B cell (primary cell): ENCODE measurements at regions of chr22 and their contacts with region 1.

Region 1: GRCh38 chr22:37316875-37317371 is 34.6 kb downstream of the CYTH4 start:
- DNase-seq: peak; percentile 83
- ATAC-seq: peak; percentile 86
- H3K4me3 ChIP-seq: no peak overlapping the region
- H3K4me3 Mint-ChIP-seq: no peak overlapping the region
- H3K27ac ChIP-seq: no peak overlapping the region
- H3K27ac Mint-ChIP-seq: no peak overlapping the region
- H3K4me1 ChIP-seq: peaks cover 20 to 29% of the 10 kb centered on the region in 2 donors
- H3K4me1 Mint-ChIP-seq: peaks cover 32% of the 10 kb centered on the region
- H3K27me3 ChIP-seq: peaks cover 0 to 3% (median 0%) of the 10 kb centered on the region in 4 experiments
- H3K27me3 Mint-ChIP-seq: peaks cover 12% of the 10 kb centered on the region
- CTCF ChIP-seq: peak; percentile 85

Region 2: GRCh38 chr22:36702842-36703215 is 614.1 kb before region 1 on chr22:
- CTCF ChIA-PET with region 1: no interaction called
- POLR2A ChIA-PET with region 1: no interaction called
- intact Hi-C with region 1: no loop called
- DNase-seq: no peak
- ATAC-seq: no peak
- H3K4me3 ChIP-seq: no peak overlapping the region
- H3K4me3 Mint-ChIP-seq: no peak overlapping the region
- H3K27ac ChIP-seq: no peak overlapping the region
- H3K27ac Mint-ChIP-seq: no peak overlapping the region
- H3K4me1 ChIP-seq: peaks cover 0 to 3% of the 10 kb centered on the region in 2 donors
- H3K4me1 Mint-ChIP-seq: peaks cover 5% of the 10 kb centered on the region
- H3K27me3 ChIP-seq: peaks cover 0 to 47% (median 33%) of the 10 kb centered on the region in 4 experiments
- H3K27me3 Mint-ChIP-seq: peaks cover 77% of the 10 kb centered on the region
- CTCF ChIP-seq: no peak

Region 3: DNA sequence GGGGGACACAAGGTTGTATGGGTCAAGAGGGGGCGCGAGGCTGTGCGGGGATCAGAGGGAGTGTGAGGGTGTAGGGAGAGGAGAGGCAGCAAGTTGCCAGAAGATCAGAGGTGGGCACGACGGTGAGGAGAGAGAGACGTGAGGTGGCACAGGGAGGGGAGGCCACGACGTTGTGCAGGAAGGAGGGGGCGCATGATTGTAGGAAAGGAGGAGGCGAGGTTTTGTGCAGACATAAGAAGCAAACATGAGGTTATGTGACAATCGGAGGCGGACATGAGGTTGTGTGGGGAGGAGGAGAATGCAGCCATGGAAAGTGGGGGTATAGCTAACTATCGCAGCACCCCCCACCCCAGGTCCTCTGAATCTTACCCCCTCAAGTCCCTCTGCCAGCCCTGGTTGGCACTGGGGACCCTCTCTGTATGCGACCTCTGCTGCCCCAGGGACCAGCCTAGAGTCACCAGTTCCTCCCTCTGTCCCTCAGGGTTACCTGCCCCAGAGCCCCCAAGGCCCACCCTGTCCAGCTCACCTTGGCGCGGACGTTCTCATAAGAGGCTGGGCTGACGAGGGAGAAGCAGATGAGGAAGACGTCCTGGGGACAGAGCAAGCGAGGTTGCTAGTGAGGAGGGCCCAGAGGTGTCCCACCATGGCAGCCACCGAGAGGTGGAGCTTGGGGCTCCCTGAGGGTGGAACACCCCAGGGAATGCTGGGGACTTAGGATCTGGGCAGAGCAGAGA is 85.3 kb before region 1 on chr22:
- CTCF ChIA-PET with region 1: no interaction called
- POLR2A ChIA-PET with region 1: no interaction called
- intact Hi-C with region 1: no loop called
- DNase-seq: no peak
- ATAC-seq: no peak
- H3K4me3 ChIP-seq: no peak overlapping the region
- H3K4me3 Mint-ChIP-seq: peak overlapping the region; percentile 86
- H3K27ac ChIP-seq: peak overlapping the region; percentile 72 to 91
- H3K27ac Mint-ChIP-seq: peak overlapping the region; percentile 100
- H3K4me1 ChIP-seq: peaks cover 87 to 96% of the 10 kb centered on the region in 2 donors
- H3K4me1 Mint-ChIP-seq: peaks cover 88% of the 10 kb centered on the region
- H3K27me3 ChIP-seq: no peaks in the 10 kb centered on the region
- H3K27me3 Mint-ChIP-seq: no peaks in the 10 kb centered on the region
- CTCF ChIP-seq: no peak

Region 4: DNA sequence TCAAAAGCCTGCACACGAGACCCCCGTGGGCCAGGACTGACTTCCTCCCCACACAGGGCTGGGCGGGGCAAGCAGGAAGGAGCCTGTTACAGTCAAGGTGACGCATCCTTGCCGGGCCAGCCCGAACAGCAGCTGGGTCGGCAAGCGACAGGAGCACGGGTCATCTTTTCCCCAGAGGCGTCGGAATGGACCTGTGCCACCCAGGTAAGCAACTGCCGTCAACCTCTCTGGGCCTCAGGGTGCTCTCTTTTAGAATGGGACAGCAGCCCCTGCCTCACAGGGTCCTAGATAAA is 34.6 kb before region 1 on chr22 and contains the start of gene CYTH4:
- CTCF ChIA-PET with region 1: interaction called, 11 read pairs
- POLR2A ChIA-PET with region 1: interaction called, 3 read pairs
- intact Hi-C with region 1: no loop called
- DNase-seq: peak; percentile 82
- ATAC-seq: peak; percentile 58
- H3K4me3 ChIP-seq: peak within 1 kb of the TSS; percentile 82 to 100 (median 99)
- H3K4me3 Mint-ChIP-seq: peak within 1 kb of the TSS; percentile 89
- H3K27ac ChIP-seq: peak within 1 kb of the TSS; percentile 79 to 83
- H3K27ac Mint-ChIP-seq: peak within 1 kb of the TSS; percentile 97
- H3K4me1 ChIP-seq: peaks cover 36 to 73% of the 10 kb centered on the region in 2 donors
- H3K4me1 Mint-ChIP-seq: peaks cover 81% of the 10 kb centered on the region
- H3K27me3 ChIP-seq: no peaks in the 10 kb centered on the region
- H3K27me3 Mint-ChIP-seq: no peaks in the 10 kb centered on the region
- CTCF ChIP-seq: no peak
- total RNA-seq, gene CYTH4: 92.2 and 98.0 TPM in 2 replicates

Region 5: DNA sequence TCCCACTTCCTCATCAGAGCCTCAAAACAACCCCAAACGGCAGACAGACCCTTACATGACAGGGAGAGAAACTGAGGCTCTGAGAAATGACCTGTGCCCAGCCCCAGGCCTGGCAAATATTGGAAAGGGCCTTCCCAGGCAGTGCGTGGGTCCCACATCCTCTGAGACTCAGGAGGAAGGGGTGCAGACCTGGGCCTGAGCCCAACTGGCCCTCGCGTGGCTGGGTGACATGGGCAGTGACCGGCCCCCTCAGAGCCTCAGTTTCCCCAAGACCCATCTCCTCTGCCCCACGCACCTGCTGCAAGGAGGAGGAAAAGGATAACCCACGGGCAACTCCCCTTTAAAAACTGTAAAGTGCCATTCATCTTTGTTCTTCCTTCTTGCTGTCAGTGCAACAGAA is 74.8 kb after region 1 on chr22:
- CTCF ChIA-PET with region 1: no interaction called
- POLR2A ChIA-PET with region 1: no interaction called
- intact Hi-C with region 1: no loop called
- DNase-seq: no peak
- ATAC-seq: no peak
- H3K4me3 ChIP-seq: no peak overlapping the region
- H3K4me3 Mint-ChIP-seq: no peak overlapping the region
- H3K27ac ChIP-seq: no peak overlapping the region
- H3K27ac Mint-ChIP-seq: no peak overlapping the region
- H3K4me1 ChIP-seq: no peaks in the 10 kb centered on the region
- H3K4me1 Mint-ChIP-seq: no peaks in the 10 kb centered on the region
- H3K27me3 ChIP-seq: peaks cover 0 to 14% (median 0%) of the 10 kb centered on the region in 4 experiments
- H3K27me3 Mint-ChIP-seq: peaks cover 23% of the 10 kb centered on the region
- CTCF ChIP-seq: no peak

Region 6: GRCh38 chr22:37403267-37403960 is 86.5 kb after region 1 on chr22:
- CTCF ChIA-PET with region 1: no interaction called
- POLR2A ChIA-PET with region 1: no interaction called
- intact Hi-C with region 1: no loop called
- DNase-seq: no peak
- ATAC-seq: no peak
- H3K4me3 ChIP-seq: no peak overlapping the region
- H3K4me3 Mint-ChIP-seq: no peak overlapping the region
- H3K27ac ChIP-seq: no peak overlapping the region
- H3K27ac Mint-ChIP-seq: no peak overlapping the region
- H3K4me1 ChIP-seq: no peaks in the 10 kb centered on the region
- H3K4me1 Mint-ChIP-seq: no peaks in the 10 kb centered on the region
- H3K27me3 ChIP-seq: peaks cover 0 to 4% (median 0%) of the 10 kb centered on the region in 4 experiments
- H3K27me3 Mint-ChIP-seq: peaks cover 9% of the 10 kb centered on the region
- CTCF ChIP-seq: no peak

Region 7: GRCh38 chr22:37428649-37429586 is 112.0 kb after region 1 on chr22:
- CTCF ChIA-PET with region 1: interaction called, 76 read pairs
- POLR2A ChIA-PET with region 1: no interaction called
- intact Hi-C with region 1: loop called (anchors 1 kb)
- DNase-seq: peak; percentile 75
- ATAC-seq: peak; percentile 54
- H3K4me3 ChIP-seq: no peak overlapping the region
- H3K4me3 Mint-ChIP-seq: peak overlapping the region; percentile 44
- H3K27ac ChIP-seq: no peak overlapping the region
- H3K27ac Mint-ChIP-seq: no peak overlapping the region
- H3K4me1 ChIP-seq: peaks cover 24 to 27% of the 10 kb centered on the region in 2 donors
- H3K4me1 Mint-ChIP-seq: peaks cover 21% of the 10 kb centered on the region
- H3K27me3 ChIP-seq: peaks cover 0 to 84% (median 27%) of the 10 kb centered on the region in 4 experiments
- H3K27me3 Mint-ChIP-seq: peaks cover 69% of the 10 kb centered on the region
- CTCF ChIP-seq: peak; percentile 69

Region 8: DNA sequence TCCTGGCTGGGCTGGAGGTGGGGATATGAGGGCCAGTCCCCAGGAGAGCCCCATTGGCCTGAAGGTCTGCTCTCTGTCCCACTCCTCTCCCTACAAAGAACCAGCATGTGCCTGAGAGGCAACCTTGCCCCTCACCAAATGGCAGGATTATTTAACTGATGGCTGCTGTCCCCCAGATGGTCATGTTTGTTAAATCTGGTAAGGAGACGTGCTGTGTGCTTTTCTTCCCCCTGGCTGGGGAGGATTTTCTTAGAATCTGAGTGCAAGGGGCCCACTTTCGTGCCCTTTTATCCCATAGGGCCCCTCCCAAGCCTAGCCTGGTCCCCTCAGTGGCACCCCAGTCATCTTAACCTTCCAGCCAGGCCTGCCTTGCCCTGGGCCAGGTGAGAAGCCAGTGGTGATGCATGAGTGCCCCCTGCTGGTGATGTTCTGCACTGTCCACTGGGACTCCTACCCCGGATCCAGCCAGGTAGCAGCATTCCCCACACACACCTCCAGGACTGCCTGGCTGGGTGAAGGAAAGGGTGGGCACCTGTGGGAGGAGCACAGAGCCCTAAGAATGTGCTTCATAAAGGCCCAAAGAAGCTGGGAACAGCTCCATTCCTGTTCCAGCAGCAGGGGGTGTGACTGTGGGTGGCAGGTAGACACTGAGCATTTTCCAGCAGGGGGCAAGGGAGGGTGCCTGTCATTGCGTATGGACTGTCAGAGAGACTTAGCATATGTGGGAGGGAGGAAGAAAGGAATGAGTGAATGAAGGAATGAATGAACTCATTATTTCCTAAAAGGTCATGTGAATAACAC is 140.4 kb after region 1 on chr22:
- CTCF ChIA-PET with region 1: interaction called, 62 read pairs
- POLR2A ChIA-PET with region 1: interaction called, 3 read pairs
- intact Hi-C with region 1: loop called (anchors 1 kb)
- DNase-seq: peak; percentile 82
- ATAC-seq: peak; percentile 95
- H3K4me3 ChIP-seq: no peak overlapping the region
- H3K4me3 Mint-ChIP-seq: no peak overlapping the region
- H3K27ac ChIP-seq: no peak overlapping the region
- H3K27ac Mint-ChIP-seq: no peak overlapping the region
- H3K4me1 ChIP-seq: no peaks in the 10 kb centered on the region
- H3K4me1 Mint-ChIP-seq: peaks cover 1% of the 10 kb centered on the region
- H3K27me3 ChIP-seq: no peaks in the 10 kb centered on the region
- H3K27me3 Mint-ChIP-seq: no peaks in the 10 kb centered on the region
- CTCF ChIP-seq: peak; percentile 97

Region 9: DNA sequence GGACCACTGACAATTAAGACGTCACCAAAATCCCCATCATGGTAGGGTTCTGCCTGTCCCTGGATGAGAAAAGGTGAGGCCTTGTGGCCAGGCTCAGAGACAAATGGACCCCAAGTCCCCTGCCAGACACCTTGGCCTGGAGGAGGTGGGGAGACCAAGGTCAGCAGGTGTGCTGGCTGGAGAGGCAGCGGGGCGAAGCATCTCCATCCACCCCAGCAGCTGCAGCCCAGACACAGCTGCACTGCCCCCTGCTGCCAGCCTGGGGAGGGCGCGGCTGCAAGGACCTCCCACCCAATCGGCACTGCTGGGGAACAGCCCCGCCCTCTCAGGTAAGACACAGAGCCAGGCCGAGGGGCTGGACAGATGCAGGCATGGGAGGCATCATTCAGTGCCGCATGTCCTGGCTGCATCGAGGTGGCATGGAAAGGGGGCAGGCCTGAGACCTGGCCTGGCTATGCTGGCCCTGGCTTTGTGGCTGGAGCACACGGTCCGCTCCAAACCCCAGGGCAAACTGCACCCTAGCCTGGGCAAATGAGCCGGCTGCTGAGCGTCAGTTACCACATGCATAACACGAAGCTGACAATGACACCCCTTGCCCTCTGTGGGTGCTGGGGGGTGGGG is 181.5 kb after region 1 on chr22:
- CTCF ChIA-PET with region 1: interaction called, 4 read pairs
- POLR2A ChIA-PET with region 1: no interaction called
- intact Hi-C with region 1: loop called (anchors 1 kb)
- DNase-seq: peak; percentile 78
- ATAC-seq: peak; percentile 97
- H3K4me3 ChIP-seq: no peak overlapping the region
- H3K4me3 Mint-ChIP-seq: no peak overlapping the region
- H3K27ac ChIP-seq: no peak overlapping the region
- H3K27ac Mint-ChIP-seq: no peak overlapping the region
- H3K4me1 ChIP-seq: peaks cover 0 to 7% of the 10 kb centered on the region in 2 donors
- H3K4me1 Mint-ChIP-seq: no peaks in the 10 kb centered on the region
- H3K27me3 ChIP-seq: peaks cover 0 to 29% (median 1%) of the 10 kb centered on the region in 4 experiments
- H3K27me3 Mint-ChIP-seq: peaks cover 20% of the 10 kb centered on the region
- CTCF ChIP-seq: peak; percentile 76